ENCODE measurements at regions of chr1 and their contacts with region 1.

Region 1: GRCh38 chr1:31789259-31790065 is 25.3 kb upstream of the ADGRB2 start:
- DNase-seq: peak; percentile 81 to 99 (median 90)
- ATAC-seq: peak; percentile 88
- H3K4me3 ChIP-seq: peak overlapping the region; percentile 68
- H3K4me3 Mint-ChIP-seq: peak overlapping the region; percentile 81 to 93 (median 92)
- H3K27ac ChIP-seq: peak overlapping the region; percentile 82
- H3K27ac Mint-ChIP-seq: peak overlapping the region in 6 of 9 donors; percentile 56 to 94 (median 84)
- H3K4me1 ChIP-seq: peaks cover 3 to 5% of the 10 kb centered on the region in 2 donors
- H3K4me1 Mint-ChIP-seq: peaks cover 7 to 17% (median 9%) of the 10 kb centered on the region in 7 donors
- H3K27me3 ChIP-seq: no peaks in the 10 kb centered on the region
- H3K27me3 Mint-ChIP-seq: peaks cover 0 to 7% (median 0%) of the 10 kb centered on the region in 5 donors

Region 2: GRCh38 chr1:31548907-31549808 is 240.3 kb before region 1 on chr1:
- CTCF ChIA-PET with region 1: interaction called, 6 read pairs
- POLR2A ChIA-PET with region 1: no interaction called
- intact Hi-C with region 1: loop called in 1 of 2 experiments (anchors 1 kb)
- DNase-seq: peak; percentile 59 to 89 (median 79)
- ATAC-seq: peak; percentile 99
- H3K4me3 ChIP-seq: no peak overlapping the region
- H3K4me3 Mint-ChIP-seq: peak overlapping the region; percentile 36 to 74 (median 60)
- H3K27ac ChIP-seq: no peak overlapping the region
- H3K27ac Mint-ChIP-seq: peak overlapping the region in 3 of 9 donors; percentile 23 to 68 (median 58)
- H3K4me1 ChIP-seq: peaks cover 5 to 7% of the 10 kb centered on the region in 2 donors
- H3K4me1 Mint-ChIP-seq: peaks cover 0 to 13% (median 9%) of the 10 kb centered on the region in 7 donors
- H3K27me3 ChIP-seq: no peaks in the 10 kb centered on the region
- H3K27me3 Mint-ChIP-seq: peaks cover 5 to 15% (median 13%) of the 10 kb centered on the region in 5 donors

Region 3: DNA sequence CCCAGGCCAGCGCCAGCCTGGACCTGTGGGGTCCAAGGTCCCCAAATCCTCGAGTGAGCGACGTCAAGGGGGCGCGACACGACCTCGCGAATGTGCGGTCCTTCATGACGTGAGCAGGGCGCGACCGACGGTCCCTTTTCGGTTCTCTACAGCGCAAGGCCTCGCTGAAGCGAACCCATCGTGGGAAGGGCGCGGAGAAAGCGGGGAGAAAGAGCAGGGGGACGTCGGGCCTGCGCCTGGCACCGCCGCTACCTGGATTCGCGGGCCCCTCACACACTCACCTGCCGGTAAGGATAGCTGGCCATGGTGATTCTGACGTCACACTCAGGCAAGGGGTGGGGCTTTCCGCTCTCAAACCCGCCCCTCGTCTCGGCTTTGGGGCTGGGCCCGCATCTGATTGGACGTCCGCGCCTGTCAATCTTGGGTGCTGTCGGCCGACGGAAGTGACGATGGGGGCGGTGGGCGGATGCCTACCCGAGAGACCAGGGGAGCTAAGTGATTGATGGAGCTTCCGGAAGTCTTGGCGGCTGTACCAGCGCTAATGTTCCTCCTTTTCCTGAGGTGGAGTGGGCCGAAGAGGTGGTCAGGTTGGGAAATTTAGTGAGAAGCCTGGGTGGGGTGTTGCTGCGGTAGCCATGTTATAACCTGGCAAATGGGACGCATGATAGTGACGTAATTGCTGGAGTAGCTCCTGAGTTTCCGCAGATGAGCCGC is 144.7 kb before region 1 on chr1 and contains the start of gene PEF1:
- CTCF ChIA-PET with region 1: interaction called, 4 read pairs
- POLR2A ChIA-PET with region 1: interaction called, 4 read pairs
- intact Hi-C with region 1: loop called (anchors 1 kb)
- DNase-seq: peak; percentile 97 to 100 (median 99)
- ATAC-seq: peak; percentile 94
- H3K4me3 ChIP-seq: peak within 1 kb of the TSS; percentile 91
- H3K4me3 Mint-ChIP-seq: peak within 1 kb of the TSS; percentile 92 to 100 (median 98)
- H3K27ac ChIP-seq: peak within 1 kb of the TSS; percentile 98
- H3K27ac Mint-ChIP-seq: peak within 1 kb of the TSS; percentile 98 to 100 (median 99)
- H3K4me1 ChIP-seq: peaks cover 27 to 30% of the 10 kb centered on the region in 2 donors
- H3K4me1 Mint-ChIP-seq: peaks cover 18 to 47% (median 40%) of the 10 kb centered on the region in 7 donors
- H3K27me3 ChIP-seq: no peaks in the 10 kb centered on the region
- H3K27me3 Mint-ChIP-seq: no peaks in the 10 kb centered on the region
- total RNA-seq, gene PEF1: 37.7 to 49.8 (median 40.8) TPM

Region 4: GRCh38 chr1:31715087-31715872 is 74.2 kb before region 1 on chr1:
- CTCF ChIA-PET with region 1: interaction called, 10 read pairs
- POLR2A ChIA-PET with region 1: no interaction called
- intact Hi-C with region 1: loop called in 1 of 2 experiments (anchors 1 kb)
- DNase-seq: peak in 1 of 9 donors; percentile 45
- ATAC-seq: peak; percentile 66
- H3K4me3 ChIP-seq: peak overlapping the region; percentile 13
- H3K4me3 Mint-ChIP-seq: peak overlapping the region; percentile 42 to 83 (median 73)
- H3K27ac ChIP-seq: no peak overlapping the region
- H3K27ac Mint-ChIP-seq: no peak overlapping the region
- H3K4me1 ChIP-seq: peaks cover 3 to 16% of the 10 kb centered on the region in 2 donors
- H3K4me1 Mint-ChIP-seq: peaks cover 6 to 19% (median 16%) of the 10 kb centered on the region in 7 donors
- H3K27me3 ChIP-seq: peaks cover 2 to 10% of the 10 kb centered on the region in 2 donors
- H3K27me3 Mint-ChIP-seq: peaks cover 59 to 71% (median 64%) of the 10 kb centered on the region in 5 donors

Region 5: DNA sequence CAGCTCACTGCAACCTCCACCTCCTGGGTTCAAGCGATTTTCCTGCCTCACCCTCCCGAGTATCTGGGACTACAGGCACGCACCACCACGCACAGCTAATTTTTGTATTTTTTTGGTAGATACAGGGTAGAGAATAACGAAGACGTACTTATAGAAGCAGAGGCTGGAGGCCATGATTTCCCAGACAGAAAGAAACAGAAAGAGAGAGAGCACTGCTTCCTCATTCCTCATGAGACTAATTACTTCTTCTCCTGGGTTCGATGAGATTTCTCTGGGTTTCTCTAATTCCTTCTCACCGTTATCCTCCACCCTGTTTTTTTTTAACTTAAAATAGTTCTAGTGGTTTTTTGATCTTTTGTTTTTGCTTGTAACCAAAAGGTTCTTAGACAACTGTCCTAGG is 172.1 kb after region 1 on chr1:
- CTCF ChIA-PET with region 1: interaction called, 12 read pairs
- POLR2A ChIA-PET with region 1: interaction called, 3 read pairs
- intact Hi-C with region 1: loop called in 1 of 2 experiments (anchors 1 kb)
- DNase-seq: no peak
- ATAC-seq: no peak
- H3K4me3 ChIP-seq: no peak overlapping the region
- H3K4me3 Mint-ChIP-seq: peak overlapping the region; percentile 5 to 74 (median 56)
- H3K27ac ChIP-seq: no peak overlapping the region
- H3K27ac Mint-ChIP-seq: peak overlapping the region; percentile 44 to 94 (median 77)
- H3K4me1 ChIP-seq: peaks cover 8 to 34% of the 10 kb centered on the region in 2 donors
- H3K4me1 Mint-ChIP-seq: peaks cover 38 to 65% (median 61%) of the 10 kb centered on the region in 7 donors
- H3K27me3 ChIP-seq: no peaks in the 10 kb centered on the region
- H3K27me3 Mint-ChIP-seq: no peaks in the 10 kb centered on the region

Measured in naive thymus-derived CD4-positive, alpha-beta T cell (primary cell).